ENCODE measurements at regions of chr4 and their contacts with region 1.

Region 1: DNA sequence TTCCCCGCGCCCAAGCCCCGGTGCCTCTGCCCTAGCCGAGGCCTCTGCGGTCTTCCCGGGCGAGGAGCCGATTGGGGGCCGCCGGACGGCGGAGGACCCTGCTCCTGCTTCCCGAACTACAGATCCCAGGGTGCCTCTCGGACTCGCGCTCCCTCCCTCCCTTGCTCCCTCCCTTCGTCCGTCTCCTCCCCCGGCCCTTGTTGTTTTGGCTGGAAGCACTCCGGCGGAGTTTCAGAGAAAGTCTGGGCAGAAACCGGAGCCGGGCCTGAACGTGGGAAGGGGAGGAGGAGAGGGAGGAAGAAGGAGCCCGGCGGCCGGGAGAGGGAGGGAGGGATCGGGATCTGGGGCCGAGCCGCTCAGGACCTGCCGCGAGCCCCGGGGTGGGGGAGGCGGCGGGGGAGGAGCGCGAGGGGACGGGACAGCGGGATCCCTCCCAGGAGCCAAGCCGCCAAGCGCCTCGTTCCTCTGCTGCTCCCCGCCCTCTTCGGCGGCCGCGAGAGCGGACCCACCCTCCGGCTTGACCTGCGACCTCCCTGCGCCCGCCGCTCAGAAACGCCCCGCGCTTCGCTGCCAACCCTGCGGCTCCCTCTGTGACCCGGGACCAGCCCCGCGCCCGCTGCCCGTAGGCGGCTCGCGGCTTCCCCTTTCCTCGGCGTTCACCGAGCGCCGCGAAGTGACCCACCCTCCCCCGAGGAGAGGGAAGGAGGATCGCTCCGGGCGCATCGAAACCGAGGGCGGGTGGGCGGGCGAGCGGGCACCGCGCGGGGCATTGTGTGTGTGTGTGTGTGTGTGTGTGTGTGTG is 496 bp upstream of the GAB1 start:
- DNase-seq: peak; percentile 64 to 92
- H3K4me3 ChIP-seq: peak overlapping the region; percentile 82 to 93
- H3K27ac ChIP-seq: peak overlapping the region; percentile 93 to 98
- H3K4me1 ChIP-seq: peaks cover 0 to 5% of the 10 kb centered on the region in 2 donors
- H3K27me3 ChIP-seq: no peaks in the 10 kb centered on the region
- CTCF ChIP-seq: no peak

Region 2: GRCh38 chr4:142687547-142688275 is 648.5 kb before region 1 on chr4:
- intact Hi-C with region 1: no loop called
- DNase-seq: no peak
- H3K4me3 ChIP-seq: no peak overlapping the region
- H3K27ac ChIP-seq: no peak overlapping the region
- H3K4me1 ChIP-seq: peaks cover 0 to 5% of the 10 kb centered on the region in 2 donors
- H3K27me3 ChIP-seq: no peaks in the 10 kb centered on the region
- CTCF ChIP-seq: no peak

Region 3: DNA sequence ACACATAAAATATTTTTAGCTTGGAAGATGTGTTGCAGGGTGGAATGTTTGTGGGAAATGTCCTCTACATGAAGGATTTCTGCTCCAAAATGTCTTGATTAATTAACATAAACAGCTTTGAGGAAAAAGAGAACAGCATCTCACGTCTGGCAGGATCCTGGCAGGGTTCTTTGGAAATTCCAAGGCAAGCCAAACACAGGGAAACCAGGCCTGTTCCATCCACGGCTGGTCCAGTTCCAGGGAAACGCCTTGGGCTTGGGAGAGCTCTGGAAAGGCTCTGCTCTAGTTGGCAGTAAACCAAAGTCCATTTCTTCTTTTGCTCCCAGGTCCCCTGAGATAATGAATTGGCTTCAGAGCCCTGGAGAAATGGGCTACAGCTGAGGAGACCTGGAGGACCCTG is 41.9 kb before region 1 on chr4:
- intact Hi-C with region 1: loop called (anchors 5 kb)
- DNase-seq: peak in 1 of 2 donors; percentile 83
- H3K4me3 ChIP-seq: no peak overlapping the region
- H3K27ac ChIP-seq: peak overlapping the region; percentile 59 to 64
- H3K4me1 ChIP-seq: peaks cover 4 to 15% of the 10 kb centered on the region in 2 donors
- H3K27me3 ChIP-seq: no peaks in the 10 kb centered on the region
- CTCF ChIP-seq: no peak

Region 4: GRCh38 chr4:143358923-143359643 is 22.9 kb after region 1 on chr4:
- intact Hi-C with region 1: loop called (anchors 2 kb)
- DNase-seq: no peak
- H3K4me3 ChIP-seq: peak overlapping the region; percentile 14 to 27
- H3K27ac ChIP-seq: peak overlapping the region; percentile 79 to 83
- H3K4me1 ChIP-seq: peaks cover 13 to 65% of the 10 kb centered on the region in 2 donors
- H3K27me3 ChIP-seq: no peaks in the 10 kb centered on the region
- CTCF ChIP-seq: no peak

Region 5: DNA sequence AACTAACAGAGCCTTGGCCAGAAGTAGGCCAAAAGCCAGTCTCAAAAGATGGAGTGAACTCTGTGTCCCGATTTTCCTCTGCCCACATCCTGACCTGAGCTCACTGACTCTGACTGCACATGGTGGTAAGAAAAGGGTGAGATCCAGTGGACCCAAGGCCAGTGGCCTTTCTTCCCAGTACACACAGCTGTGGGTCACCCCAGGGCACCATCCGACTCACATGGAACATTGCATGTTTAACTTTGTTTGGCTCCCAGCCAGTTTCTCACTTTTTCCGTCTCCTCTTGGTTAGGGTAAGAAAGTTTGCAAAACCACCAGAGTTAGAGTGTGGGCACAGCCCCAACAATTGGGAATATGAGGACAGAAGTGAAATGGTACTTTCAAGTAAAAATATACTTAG is 70.3 kb after region 1 on chr4:
- intact Hi-C with region 1: loop called (anchors 2 kb)
- DNase-seq: peak; percentile 67 to 98
- H3K4me3 ChIP-seq: no peak overlapping the region
- H3K27ac ChIP-seq: peak overlapping the region; percentile 49 to 57
- H3K4me1 ChIP-seq: peaks cover 16 to 77% of the 10 kb centered on the region in 2 donors
- H3K27me3 ChIP-seq: no peaks in the 10 kb centered on the region
- CTCF ChIP-seq: no peak

Measured in ascending aorta (tissue), 2 donors.